Activated B cell treated with CpG ODN at 0.5 μM for 24 hours (primary cell): ENCODE measurements at regions of chr14 and their contacts with region 1.

Region 1: GRCh38 chr14:73613046-73613383 is 698 bp downstream of the ACOT6 start:
- DNase-seq: no peak
- ATAC-seq: no peak
- H3K4me3 Mint-ChIP-seq: peak overlapping the region; percentile 84
- H3K27ac Mint-ChIP-seq: peak overlapping the region; percentile 46
- H3K4me1 Mint-ChIP-seq: peaks cover 3% of the 10 kb centered on the region
- H3K27me3 Mint-ChIP-seq: no peaks in the 10 kb centered on the region
- CTCF ChIP-seq: no peak

Region 2: DNA sequence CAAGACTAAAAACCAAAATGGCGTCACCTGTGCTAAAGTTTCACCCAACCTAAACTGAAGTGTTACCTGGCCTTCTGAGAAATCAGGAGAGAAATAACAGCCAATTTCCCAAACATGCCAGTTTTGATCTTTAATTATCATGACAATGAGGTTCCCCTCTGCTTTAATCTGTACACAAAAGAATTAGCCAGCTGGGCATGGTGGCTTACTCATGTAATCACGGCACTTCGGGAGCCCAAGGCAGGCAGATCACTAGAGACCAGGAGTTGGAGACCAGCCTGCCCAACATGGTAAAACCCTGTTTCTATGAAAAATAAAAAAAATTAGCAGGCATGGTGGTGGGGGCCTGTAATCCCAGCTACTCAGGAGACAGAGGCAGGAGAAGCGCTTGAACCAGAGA is 59.2 kb before region 1 on chr14:
- CTCF ChIA-PET with region 1: no interaction called
- POLR2A ChIA-PET with region 1: no interaction called
- intact Hi-C with region 1: no loop called
- DNase-seq: no peak
- ATAC-seq: no peak
- H3K4me3 Mint-ChIP-seq: no peak overlapping the region
- H3K27ac Mint-ChIP-seq: no peak overlapping the region
- H3K4me1 Mint-ChIP-seq: peaks cover 2% of the 10 kb centered on the region
- H3K27me3 Mint-ChIP-seq: no peaks in the 10 kb centered on the region
- CTCF ChIP-seq: no peak

Region 3: DNA sequence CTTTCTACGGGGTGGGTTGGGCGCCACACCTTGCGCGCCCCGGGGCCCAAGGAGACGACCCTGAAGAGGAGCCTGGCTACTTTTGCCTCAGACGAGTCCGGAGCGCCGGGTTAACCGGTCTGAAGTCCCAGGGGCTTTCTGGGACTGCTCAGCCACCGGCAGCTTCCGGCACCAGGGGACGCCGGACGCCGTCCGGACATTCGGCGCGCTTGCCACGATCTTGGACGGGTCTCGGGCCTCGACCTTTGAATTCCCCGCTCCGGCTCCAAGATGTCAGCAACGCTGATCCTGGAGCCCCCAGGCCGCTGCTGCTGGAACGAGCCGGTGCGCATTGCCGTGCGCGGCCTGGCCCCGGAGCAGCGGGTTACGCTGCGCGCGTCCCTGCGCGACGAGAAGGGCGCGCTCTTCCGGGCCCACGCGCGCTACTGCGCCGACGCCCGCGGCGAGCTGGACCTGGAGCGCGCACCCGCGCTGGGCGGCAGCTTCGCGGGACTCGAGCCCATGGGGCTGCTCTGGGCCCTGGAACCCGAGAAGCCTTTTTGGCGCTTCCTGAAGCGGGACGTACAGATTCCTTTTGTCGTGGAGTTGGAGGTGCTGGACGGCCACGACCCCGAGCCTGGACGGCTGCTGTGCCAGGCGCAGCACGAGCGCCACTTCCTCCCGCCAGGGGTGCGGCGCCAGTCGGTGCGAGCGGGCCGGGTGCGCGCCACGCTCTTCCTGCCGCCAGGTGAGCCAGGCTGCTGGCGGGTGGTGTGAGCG is 21.1 kb before region 1 on chr14 and contains the start of gene ACOT4:
- CTCF ChIA-PET with region 1: no interaction called
- POLR2A ChIA-PET with region 1: interaction called, 9 read pairs
- intact Hi-C with region 1: loop called (anchors 2 kb)
- DNase-seq: peak; percentile 39
- ATAC-seq: peak; percentile 83
- H3K4me3 Mint-ChIP-seq: peak within 1 kb of the TSS; percentile 76
- H3K27ac Mint-ChIP-seq: no peak within 1 kb of the TSS
- H3K4me1 Mint-ChIP-seq: peaks cover 6% of the 10 kb centered on the region
- H3K27me3 Mint-ChIP-seq: no peaks in the 10 kb centered on the region
- CTCF ChIP-seq: no peak
- total RNA-seq, gene ACOT4: 0.60 and 1.2 TPM in 2 replicates

Region 4: DNA sequence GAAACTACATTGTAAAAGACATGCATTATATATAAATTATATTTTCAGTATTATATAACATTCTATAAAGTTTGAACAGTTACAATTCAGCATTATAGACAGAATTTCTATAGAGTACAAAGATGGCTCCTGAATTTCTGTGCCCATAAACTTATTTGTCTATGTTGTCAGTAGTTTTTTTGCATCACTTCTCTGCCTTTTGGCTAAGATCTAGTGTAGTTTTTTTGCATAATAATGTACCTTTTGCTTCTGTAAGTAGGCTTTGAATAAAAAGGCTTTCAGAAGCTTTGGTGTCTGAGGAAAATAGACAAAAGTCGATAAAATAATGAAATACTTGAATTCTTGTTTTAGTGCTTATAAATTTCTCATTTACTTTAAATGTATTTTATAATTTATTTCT is 42.8 kb after region 1 on chr14:
- CTCF ChIA-PET with region 1: no interaction called
- POLR2A ChIA-PET with region 1: no interaction called
- intact Hi-C with region 1: no loop called
- DNase-seq: no peak
- ATAC-seq: no peak
- H3K4me3 Mint-ChIP-seq: no peak overlapping the region
- H3K27ac Mint-ChIP-seq: no peak overlapping the region
- H3K4me1 Mint-ChIP-seq: no peaks in the 10 kb centered on the region
- H3K27me3 Mint-ChIP-seq: no peaks in the 10 kb centered on the region
- CTCF ChIP-seq: no peak